ENCODE measurements at regions of chr20 and their contacts with region 1.

Region 1: GRCh38 chr20:57080788-57081187 is 185.7 kb downstream of the BMP7 start:
- DNase-seq: no peak
- H3K4me3 ChIP-seq: no peak overlapping the region
- H3K4me1 ChIP-seq: no peaks in the 10 kb centered on the region
- H3K27me3 ChIP-seq: no peaks in the 10 kb centered on the region

Region 2: GRCh38 chr20:57342829-57343228 is 262.0 kb after region 1 on chr20:
- in situ Hi-C with region 1: loop called (anchors 5 kb)
- DNase-seq: no peak
- H3K4me3 ChIP-seq: no peak overlapping the region
- H3K4me1 ChIP-seq: no peaks in the 10 kb centered on the region
- H3K27me3 ChIP-seq: peaks cover 9% of the 10 kb centered on the region; the same call in 1 of the 2 replicates